Dendritic cell treated with granulocyte-macrophage colony-stimulating factor and Interleukin-4, amounts not matched to agents 40 ng/mL and 50 ng/mL, for 4 days (primary cell): ENCODE measurements at regions of chr15 and their contacts with region 1.

Region 1: GRCh38 chr15:30991255-30992072 is at the start of gene MTMR10:
- H3K4me3 Mint-ChIP-seq: peak within 1 kb of the TSS; percentile 99
- H3K27ac Mint-ChIP-seq: peak within 1 kb of the TSS; percentile 99
- H3K4me1 Mint-ChIP-seq: peaks cover 28% of the 10 kb centered on the region
- H3K27me3 Mint-ChIP-seq: peaks cover 1% of the 10 kb centered on the region

Region 2: DNA sequence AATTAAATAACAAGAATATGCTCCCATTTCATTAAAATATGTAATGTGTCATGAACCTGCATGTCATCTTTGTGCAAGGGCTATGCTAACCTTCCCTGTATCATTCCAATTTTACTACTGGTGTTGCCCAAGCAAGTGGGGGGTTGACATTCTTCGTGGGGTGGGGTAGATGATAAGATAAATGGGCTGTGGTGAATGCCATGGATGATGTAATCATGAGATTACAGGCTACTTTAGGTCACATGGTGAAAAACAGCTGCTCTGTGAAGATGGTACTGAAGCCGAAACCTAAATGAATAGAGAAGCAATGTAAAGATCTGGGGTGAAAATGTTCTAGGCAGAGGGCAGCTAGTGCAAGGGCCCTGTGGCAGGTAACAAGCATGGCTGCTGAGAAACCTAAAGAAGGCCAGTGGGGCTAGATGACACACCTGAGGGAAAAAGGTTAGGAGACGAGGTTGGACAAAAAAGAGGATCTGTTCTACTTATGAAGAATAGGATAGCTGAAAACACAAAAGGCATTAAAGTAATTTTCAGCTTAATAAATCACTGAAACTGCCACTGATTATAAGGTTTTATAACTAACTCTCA is 35.2 kb before region 1 on chr15:
- intact Hi-C with region 1: loop called (anchors 5 kb)
- H3K4me3 Mint-ChIP-seq: no peak overlapping the region
- H3K27ac Mint-ChIP-seq: no peak overlapping the region
- H3K4me1 Mint-ChIP-seq: peaks cover 51% of the 10 kb centered on the region
- H3K27me3 Mint-ChIP-seq: no peaks in the 10 kb centered on the region

Region 3: DNA sequence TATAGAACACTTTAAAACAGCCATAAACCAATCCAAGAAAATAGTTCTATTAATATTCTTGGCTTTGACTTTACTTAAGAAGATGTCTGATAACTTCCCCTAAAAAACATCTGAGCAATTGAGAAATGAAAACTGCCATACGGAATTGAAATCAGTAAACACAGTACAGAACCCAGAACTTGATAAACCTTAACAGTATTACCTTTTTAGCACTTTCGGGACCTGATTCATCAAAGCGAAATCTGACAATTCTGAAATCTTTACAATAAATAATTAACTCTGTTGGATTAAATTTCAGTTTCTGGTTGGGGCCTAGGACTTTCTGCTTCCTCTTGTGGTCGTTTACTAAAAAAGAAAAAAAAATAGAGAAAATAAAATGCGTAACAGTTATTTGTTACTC is 17.4 kb before region 1 on chr15:
- intact Hi-C with region 1: loop called (anchors 2 kb)
- H3K4me3 Mint-ChIP-seq: no peak overlapping the region
- H3K27ac Mint-ChIP-seq: peak overlapping the region; percentile 60
- H3K4me1 Mint-ChIP-seq: peaks cover 43% of the 10 kb centered on the region
- H3K27me3 Mint-ChIP-seq: no peaks in the 10 kb centered on the region

Region 4: GRCh38 chr15:31013538-31014228 is 22.2 kb after region 1 on chr15:
- intact Hi-C with region 1: no loop called
- H3K4me3 Mint-ChIP-seq: no peak overlapping the region
- H3K27ac Mint-ChIP-seq: no peak overlapping the region
- H3K4me1 Mint-ChIP-seq: peaks cover 16% of the 10 kb centered on the region
- H3K27me3 Mint-ChIP-seq: no peaks in the 10 kb centered on the region

Region 5: GRCh38 chr15:31080591-31081014 is 89.1 kb after region 1 on chr15:
- intact Hi-C with region 1: loop called (anchors 5 kb)
- H3K4me3 Mint-ChIP-seq: peak overlapping the region; percentile 62
- H3K27ac Mint-ChIP-seq: peak overlapping the region; percentile 89
- H3K4me1 Mint-ChIP-seq: peaks cover 69% of the 10 kb centered on the region
- H3K27me3 Mint-ChIP-seq: peaks cover 2% of the 10 kb centered on the region